Mammary epithelial cell (primary cell): ENCODE measurements at regions of chr1 and their contacts with region 1.

Region 1: GRCh38 chr1:172609528-172609927 is 49.4 kb upstream of the FASLG start:
- DNase-seq: peak; percentile 19
- H3K4me3 ChIP-seq: no peak overlapping the region
- H3K27ac ChIP-seq: no peak overlapping the region
- H3K4me1 ChIP-seq: peaks cover 4% of the 10 kb centered on the region
- H3K27me3 ChIP-seq: no peaks in the 10 kb centered on the region
- CTCF ChIP-seq: peak; percentile 39 to 56

Region 2: GRCh38 chr1:172532700-172533509 is 76.6 kb before region 1 on chr1 and contains the start of gene SUCO:
- CTCF ChIA-PET with region 1: no interaction called
- dilution Hi-C with region 1: no loop called
- in situ Hi-C with region 1: no loop called
- intact Hi-C with region 1: loop called (anchors 2 kb)
- DNase-seq: peak; percentile 100
- H3K4me3 ChIP-seq: peak within 1 kb of the TSS; percentile 94 to 97 (median 95)
- H3K27ac ChIP-seq: peak within 1 kb of the TSS; percentile 90
- H3K4me1 ChIP-seq: peaks cover 20% of the 10 kb centered on the region
- H3K27me3 ChIP-seq: no peaks in the 10 kb centered on the region
- CTCF ChIP-seq: peak in 1 of 2 donors; percentile 28
- total RNA-seq, gene SUCO: 31.9 to 36.2 TPM

Region 3: DNA sequence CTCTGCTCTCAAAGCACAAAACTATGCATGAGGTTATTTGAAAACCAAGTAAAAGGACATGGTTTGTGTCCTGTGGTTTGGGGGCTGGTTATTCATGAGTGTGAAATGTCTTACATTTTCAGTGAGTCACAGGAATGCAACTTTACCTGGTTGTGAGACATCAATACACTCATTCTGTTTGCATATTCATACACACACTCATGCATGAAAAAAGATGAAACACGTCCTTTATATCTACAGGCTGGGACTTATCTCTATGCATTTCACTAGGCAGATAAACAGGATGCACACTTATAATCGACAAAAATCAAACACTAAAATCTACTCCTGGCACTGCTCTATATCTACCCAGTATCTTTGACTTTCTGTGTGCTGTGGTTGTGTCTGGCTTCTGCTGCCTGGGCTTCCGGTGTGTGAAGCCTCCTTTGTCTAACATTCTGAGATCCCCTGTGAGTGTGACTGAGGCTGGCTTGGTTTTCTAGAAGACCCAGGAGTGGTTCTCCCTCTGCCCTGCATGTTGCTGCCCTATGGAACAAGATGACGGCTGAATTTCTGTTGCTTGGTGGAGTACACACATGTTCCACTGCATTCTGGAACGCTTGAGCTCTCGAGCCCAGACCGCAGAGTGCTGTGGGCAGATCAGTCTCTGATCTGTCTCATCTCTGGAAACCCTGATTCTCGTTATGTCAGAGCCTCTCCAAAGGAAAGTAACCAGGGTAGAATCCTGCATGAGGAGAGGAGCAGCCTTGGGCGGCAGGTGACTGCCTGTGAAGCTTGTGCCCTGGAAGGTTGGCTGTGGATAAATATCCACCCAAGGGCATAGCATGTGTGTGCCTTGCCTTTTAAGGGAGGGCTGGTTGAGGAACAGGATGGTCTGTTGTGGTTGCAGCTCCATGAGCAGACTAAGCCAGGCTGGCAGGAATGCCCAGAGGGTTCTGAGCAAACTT is 29.6 kb after region 1 on chr1:
- CTCF ChIA-PET with region 1: no interaction called
- dilution Hi-C with region 1: no loop called
- in situ Hi-C with region 1: no loop called
- intact Hi-C with region 1: loop called (anchors 2 kb)
- DNase-seq: peak; percentile 97
- H3K4me3 ChIP-seq: peak overlapping the region; percentile 25 to 30 (median 29)
- H3K27ac ChIP-seq: peak overlapping the region; percentile 97
- H3K4me1 ChIP-seq: peaks cover 47% of the 10 kb centered on the region
- H3K27me3 ChIP-seq: no peaks in the 10 kb centered on the region
- CTCF ChIP-seq: no peak

Region 4: GRCh38 chr1:172719694-172720138 is 110.2 kb after region 1 on chr1:
- CTCF ChIA-PET with region 1: interaction called, 20 read pairs
- dilution Hi-C with region 1: no loop called
- in situ Hi-C with region 1: loop called (anchors 5 to 10 kb)
- intact Hi-C with region 1: loop called (anchors 1 kb)
- DNase-seq: no peak
- H3K4me3 ChIP-seq: peak overlapping the region in 2 of 3 experiments; percentile 12 to 24
- H3K27ac ChIP-seq: peak overlapping the region; percentile 54
- H3K4me1 ChIP-seq: peaks cover 44% of the 10 kb centered on the region
- H3K27me3 ChIP-seq: no peaks in the 10 kb centered on the region
- CTCF ChIP-seq: peak; percentile 65 to 78